PC-3 (cell line): ENCODE measurements at regions of chr15 and their contacts with region 1.

Region 1: GRCh38 chr15:45714590-45715488 is 80.0 kb downstream of the SQOR start:
- DNase-seq: peak; percentile 74
- ATAC-seq: peak; percentile 75
- H3K4me3 ChIP-seq: 0 out of 2 replicates have a peak overlapping the region, but pooled peaks have one; percentile 7
- H3K27ac ChIP-seq: no peak overlapping the region
- H3K4me1 ChIP-seq: peaks cover 7% of the 10 kb centered on the region
- H3K27me3 ChIP-seq: no peaks in the 10 kb centered on the region
- CTCF ChIP-seq: peak; percentile 85

Region 2: DNA sequence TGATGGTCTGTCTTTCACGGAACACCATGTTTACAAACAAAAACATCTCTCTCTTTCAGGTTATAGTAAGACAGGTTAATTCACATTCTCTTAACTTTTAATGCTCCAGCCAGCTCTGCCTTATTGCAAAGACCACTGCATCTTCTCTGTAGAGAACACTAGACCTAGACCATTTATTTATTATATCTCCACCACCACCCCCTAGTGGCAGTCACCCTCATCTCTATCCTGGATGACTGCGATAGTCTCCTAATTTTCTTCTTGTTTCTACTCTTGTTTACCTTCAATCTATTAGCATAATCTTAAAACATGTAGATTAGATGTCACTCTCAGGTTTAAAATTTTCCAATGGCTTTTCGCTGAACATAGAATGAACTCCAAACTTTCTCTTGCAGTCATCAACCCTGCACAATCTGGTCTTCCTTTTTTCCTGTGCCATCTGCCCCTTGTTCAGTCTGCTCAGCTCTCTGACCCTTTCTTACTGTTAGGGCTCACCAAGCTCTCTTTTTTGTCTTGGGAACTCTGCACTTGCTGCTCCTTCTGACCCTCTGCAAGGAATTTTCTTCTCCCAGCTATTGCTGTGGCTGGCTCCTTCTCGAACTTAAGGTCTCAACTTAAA is 75.6 kb after region 1 on chr15:
- CTCF ChIA-PET with region 1: interaction called, 6 read pairs
- POLR2A ChIA-PET with region 1: no interaction called
- intact Hi-C with region 1: loop called (anchors 1 kb)
- DNase-seq: peak; percentile 47
- ATAC-seq: peak; percentile 71
- H3K4me3 ChIP-seq: no peak overlapping the region
- H3K27ac ChIP-seq: no peak overlapping the region
- H3K4me1 ChIP-seq: no peaks in the 10 kb centered on the region; the same call in 1 of the 2 replicates
- H3K27me3 ChIP-seq: no peaks in the 10 kb centered on the region
- CTCF ChIP-seq: peak; percentile 79

Region 3: GRCh38 chr15:46280762-46281542 is 566.1 kb after region 1 on chr15:
- CTCF ChIA-PET with region 1: no interaction called
- POLR2A ChIA-PET with region 1: no interaction called
- intact Hi-C with region 1: loop called (anchors 1 kb)
- DNase-seq: peak; percentile 56
- ATAC-seq: peak; percentile 71
- H3K4me3 ChIP-seq: no peak overlapping the region
- H3K27ac ChIP-seq: no peak overlapping the region
- H3K4me1 ChIP-seq: no peaks in the 10 kb centered on the region
- H3K27me3 ChIP-seq: no peaks in the 10 kb centered on the region
- CTCF ChIP-seq: peak; percentile 68

Region 4: DNA sequence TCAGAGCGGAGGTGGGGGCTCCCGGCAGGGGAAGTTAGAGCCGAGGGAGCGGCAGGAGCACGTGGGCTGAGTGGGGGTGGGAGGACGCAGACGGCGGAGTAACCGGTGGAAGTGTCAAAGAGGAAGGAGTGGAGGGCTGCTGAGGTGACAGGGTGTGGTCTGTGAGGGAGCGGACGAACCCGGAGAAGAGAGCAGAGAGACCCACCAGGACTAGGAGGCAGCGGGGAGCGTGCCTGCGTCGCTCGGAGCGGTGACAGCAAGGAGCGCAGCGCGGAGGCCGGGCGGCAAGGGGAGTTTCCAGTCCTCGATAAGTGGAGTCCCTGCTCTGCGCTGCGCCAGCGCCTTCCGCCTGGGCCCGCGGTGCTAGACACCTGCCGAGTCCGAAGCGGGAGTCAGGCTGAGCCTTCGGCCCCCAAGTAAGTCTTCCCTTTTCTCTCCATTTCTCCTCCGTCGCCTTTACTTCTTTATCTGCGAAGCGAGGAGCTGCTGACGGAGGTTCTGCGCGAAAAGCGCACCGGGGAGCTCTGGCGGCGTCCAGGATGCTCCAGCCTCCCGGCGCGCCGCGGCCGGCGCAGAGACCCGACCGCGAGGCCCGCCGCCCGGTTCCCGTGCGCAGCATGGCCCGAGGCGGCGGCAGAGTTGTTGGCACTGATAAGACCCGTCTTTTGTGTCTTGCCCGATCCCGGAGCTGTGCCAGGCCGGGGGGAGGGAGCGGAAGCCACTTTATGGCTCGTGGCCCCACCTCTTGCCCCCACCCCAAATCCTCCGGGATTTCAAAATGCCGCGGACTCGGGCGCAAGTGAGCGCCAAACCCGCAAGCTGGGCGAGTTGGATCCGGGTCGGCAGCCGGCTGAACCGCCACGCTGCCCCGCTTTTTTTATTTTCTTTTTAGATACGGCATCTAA is 1469.4 kb after region 1 on chr15:
- CTCF ChIA-PET with region 1: no interaction called
- POLR2A ChIA-PET with region 1: no interaction called
- intact Hi-C with region 1: loop called (anchors 10 kb)
- DNase-seq: no peak
- ATAC-seq: peak; percentile 68
- H3K4me3 ChIP-seq: peak overlapping the region; percentile 57
- H3K27ac ChIP-seq: no peak overlapping the region
- H3K4me1 ChIP-seq: no peaks in the 10 kb centered on the region
- H3K27me3 ChIP-seq: peaks cover 44% of the 10 kb centered on the region
- CTCF ChIP-seq: no peak